ENCODE measurements at regions of chr16 and their contacts with region 1.

Region 1: DNA sequence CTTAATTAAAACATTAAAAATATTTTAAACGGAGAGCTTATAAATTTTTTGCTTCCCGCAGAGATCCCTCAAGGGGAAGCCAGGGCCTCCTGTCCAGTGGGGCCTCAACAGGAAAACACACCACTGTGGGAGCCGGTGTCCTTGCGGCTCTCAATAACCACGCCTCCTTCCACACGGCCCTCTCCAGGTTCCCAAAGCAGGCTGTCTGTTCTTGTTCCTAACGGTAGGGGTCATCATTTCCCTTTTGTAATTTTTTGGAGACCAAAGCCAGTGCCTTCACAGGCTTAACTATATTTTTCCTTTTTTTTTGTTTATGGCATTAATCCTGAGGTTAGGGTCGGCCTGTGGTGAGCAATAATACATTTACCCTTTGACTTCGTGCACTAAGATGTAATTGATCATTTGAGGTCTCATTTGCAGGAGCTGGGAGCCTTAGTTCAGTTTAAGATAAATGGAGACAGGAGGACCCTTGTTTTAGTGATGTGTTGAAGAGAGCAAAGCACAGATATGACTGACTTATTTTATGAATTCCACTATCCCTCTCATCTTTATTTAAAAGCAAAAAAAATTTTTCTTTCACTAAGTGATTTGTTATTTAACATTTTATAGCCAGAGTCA is 77.5 kb upstream of the N4BP1 start:
- DNase-seq: peak; percentile 61 to 66
- H3K4me3 ChIP-seq: no peak overlapping the region
- H3K27ac ChIP-seq: no peak overlapping the region
- H3K4me1 ChIP-seq: no peaks in the 10 kb centered on the region
- H3K27me3 ChIP-seq: no peaks in the 10 kb centered on the region
- CTCF ChIP-seq: peak in 5 of 6 experiments; percentile 70 to 85 (median 75)
- POLR2A ChIP-seq: no peak

Region 2: GRCh38 chr16:48347191-48347865 is 340.2 kb before region 1 on chr16:
- intact Hi-C with region 1: no loop called
- DNase-seq: peak in 1 of 2 donors; percentile 12
- H3K4me3 ChIP-seq: no peak overlapping the region
- H3K27ac ChIP-seq: peak overlapping the region in 1 of 3 donors; percentile 19
- H3K4me1 ChIP-seq: no peaks in the 10 kb centered on the region
- H3K27me3 ChIP-seq: no peaks in the 10 kb centered on the region
- CTCF ChIP-seq: no peak
- POLR2A ChIP-seq: no peak

Region 3: GRCh38 chr16:48499923-48500381 is 187.6 kb before region 1 on chr16:
- intact Hi-C with region 1: no loop called
- DNase-seq: peak; percentile 56 to 62
- H3K4me3 ChIP-seq: no peak overlapping the region
- H3K27ac ChIP-seq: peak overlapping the region; percentile 83 to 95 (median 85)
- H3K4me1 ChIP-seq: peaks cover 26 to 38% of the 10 kb centered on the region in 2 donors
- H3K27me3 ChIP-seq: no peaks in the 10 kb centered on the region
- CTCF ChIP-seq: no peak
- POLR2A ChIP-seq: no peak

Region 4: GRCh38 chr16:48641770-48642169 is 45.8 kb before region 1 on chr16:
- intact Hi-C with region 1: no loop called
- DNase-seq: no peak
- H3K4me3 ChIP-seq: no peak overlapping the region
- H3K27ac ChIP-seq: no peak overlapping the region
- H3K4me1 ChIP-seq: no peaks in the 10 kb centered on the region
- H3K27me3 ChIP-seq: no peaks in the 10 kb centered on the region
- CTCF ChIP-seq: no peak
- POLR2A ChIP-seq: no peak

Region 5: DNA sequence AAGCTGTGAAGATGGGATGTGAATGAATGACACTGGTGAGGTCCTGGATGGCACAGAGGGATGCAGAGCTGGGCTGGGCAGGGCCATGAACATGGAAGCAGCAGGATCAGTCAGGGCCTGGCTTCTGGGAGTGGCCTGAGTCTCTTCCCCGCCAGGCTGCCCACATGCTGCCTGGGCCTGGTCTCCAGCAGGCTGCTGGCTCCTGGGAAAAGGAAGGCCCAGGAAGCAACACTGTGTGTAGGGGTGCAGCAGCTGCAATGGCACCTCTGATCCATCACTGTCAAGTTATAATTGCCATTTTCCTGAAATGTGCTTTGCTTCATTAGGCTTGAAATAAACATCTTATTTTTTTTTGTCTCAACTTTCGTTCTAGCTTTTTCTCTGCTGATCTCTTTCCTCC is 182.6 kb after region 1 on chr16:
- intact Hi-C with region 1: no loop called
- DNase-seq: no peak
- H3K4me3 ChIP-seq: no peak overlapping the region
- H3K27ac ChIP-seq: no peak overlapping the region
- H3K4me1 ChIP-seq: no peaks in the 10 kb centered on the region
- H3K27me3 ChIP-seq: no peaks in the 10 kb centered on the region
- CTCF ChIP-seq: no peak
- POLR2A ChIP-seq: no peak

Region 6: DNA sequence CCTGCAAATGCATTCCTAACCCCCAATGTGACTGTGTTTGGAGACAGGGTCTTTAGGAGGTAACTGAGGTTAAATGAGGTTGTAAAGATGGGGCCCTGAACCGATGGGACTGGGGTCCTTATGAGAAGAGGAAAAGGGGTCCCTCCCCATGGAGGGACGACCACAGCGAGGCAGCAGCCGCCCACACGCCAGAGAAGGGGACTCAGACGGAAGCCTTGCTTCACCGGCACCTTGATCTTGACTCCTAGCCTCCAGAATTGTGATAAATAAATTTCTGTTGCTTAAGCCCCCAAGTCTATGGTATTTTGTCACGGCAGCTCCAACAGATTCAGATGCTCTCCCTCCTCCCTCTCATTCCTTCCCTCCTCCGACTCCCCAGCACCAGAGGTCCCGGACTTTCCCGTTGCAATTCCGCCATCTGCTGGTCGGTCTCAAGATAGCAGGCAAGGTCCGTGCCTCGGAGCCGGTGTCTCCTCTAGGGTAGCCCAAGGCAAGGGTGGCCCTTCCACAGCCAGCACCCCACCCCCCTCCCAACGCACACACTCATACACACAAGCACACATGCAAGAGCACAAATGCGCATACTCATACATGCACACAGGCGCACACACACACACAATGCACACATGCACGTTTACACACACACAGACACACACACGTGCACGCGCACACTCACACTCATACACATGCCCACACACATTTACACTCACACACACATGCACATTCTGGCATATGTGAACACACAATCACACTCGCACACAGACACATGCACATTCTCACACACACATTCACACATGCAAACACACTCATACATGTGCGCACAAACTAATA is 663.0 kb after region 1 on chr16:
- intact Hi-C with region 1: loop called (anchors 2 kb)
- DNase-seq: peak; percentile 52 to 65
- H3K4me3 ChIP-seq: no peak overlapping the region
- H3K27ac ChIP-seq: no peak overlapping the region
- H3K4me1 ChIP-seq: no peaks in the 10 kb centered on the region
- H3K27me3 ChIP-seq: peaks cover 3% of the 10 kb centered on the region
- CTCF ChIP-seq: peak; percentile 33 to 88 (median 74)
- POLR2A ChIP-seq: no peak

Measured in thyroid gland (tissue), 4 donors.